K562 (cell line): ENCODE measurements at regions of chr13 and their contacts with region 1.

Region 1: GRCh38 chr13:107993239-107993872 is 222.0 kb downstream of the LIG4 start:
- DNase-seq: peak; percentile 18 to 27 (median 22)
- ATAC-seq: peak; percentile 72
- H3K4me3 ChIP-seq: no peak overlapping the region
- H3K27ac ChIP-seq: no peak overlapping the region
- H3K4me1 ChIP-seq: no peaks in the 10 kb centered on the region
- H3K27me3 ChIP-seq: no peaks in the 10 kb centered on the region
- CTCF ChIP-seq: no peak
- EP300 ChIP-seq: no peak
- POLR2A ChIP-seq: no peak
- RAD21 ChIP-seq: no peak

Region 2: DNA sequence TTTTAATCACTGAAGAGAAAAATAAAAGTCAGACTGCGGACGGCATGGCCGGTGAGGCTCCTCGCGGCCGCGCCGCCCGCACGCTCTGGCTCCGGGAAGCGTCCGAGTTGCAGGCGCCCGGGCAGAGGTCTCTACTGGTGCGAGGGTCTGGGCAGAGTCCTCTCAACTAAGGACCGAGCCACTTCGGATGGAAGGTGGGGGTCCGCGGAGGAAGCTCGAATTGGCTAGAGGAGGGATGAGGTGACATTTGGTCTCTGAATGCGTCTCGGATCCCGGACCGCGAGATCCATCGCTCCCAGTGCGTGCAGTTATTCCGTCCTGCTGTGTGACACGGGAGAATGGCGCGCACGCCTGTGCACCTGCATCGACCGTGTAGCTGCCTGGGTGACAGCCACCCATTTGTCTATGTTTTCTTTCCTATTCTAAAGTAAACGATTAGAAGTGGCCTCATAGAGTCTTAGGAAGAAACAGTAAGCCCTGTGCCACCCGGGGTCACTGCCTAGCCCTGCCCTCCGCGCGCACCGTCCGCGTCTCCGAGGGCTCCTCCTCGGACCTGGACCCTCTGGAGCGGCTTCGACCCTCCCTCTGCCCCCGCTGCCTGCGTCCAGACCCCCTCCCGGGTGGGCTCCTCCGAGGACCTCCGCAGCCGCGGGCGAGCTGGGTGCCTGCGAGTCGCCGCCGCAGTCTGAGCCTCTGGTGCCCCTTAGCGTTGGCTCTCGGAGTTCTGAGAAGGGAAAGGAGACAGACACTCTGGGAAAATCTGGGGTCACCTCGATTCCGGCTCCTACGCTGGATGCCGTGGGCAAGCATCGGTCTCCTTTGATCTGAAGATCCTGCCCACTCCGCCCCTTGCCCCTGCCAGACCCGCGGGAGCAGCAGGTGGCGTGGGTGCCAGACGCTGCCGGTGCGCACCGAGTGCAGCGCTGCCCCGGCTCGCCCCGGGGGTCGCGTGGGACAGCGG is 125.4 kb before region 1 on chr13:
- CTCF ChIA-PET with region 1: no interaction called
- POLR2A ChIA-PET with region 1: no interaction called
- in situ Hi-C with region 1: no loop called
- intact Hi-C with region 1: loop called (anchors 2 kb)
- DNase-seq: peak; percentile 73 to 85 (median 78)
- ATAC-seq: peak; percentile 75
- H3K4me3 ChIP-seq: peak overlapping the region; percentile 48
- H3K27ac ChIP-seq: no peak overlapping the region; the same call in 2 of the 3 replicates
- H3K4me1 ChIP-seq: peaks cover 22 to 31% of the 10 kb centered on the region in 2 experiments; a peak in 4 of 5 replicates
- H3K27me3 ChIP-seq: peaks cover 18 to 28% of the 10 kb centered on the region in 2 experiments
- CTCF ChIP-seq: no peak
- EP300 ChIP-seq: no peak
- POLR2A ChIP-seq: no peak
- RAD21 ChIP-seq: no peak

Region 3: DNA sequence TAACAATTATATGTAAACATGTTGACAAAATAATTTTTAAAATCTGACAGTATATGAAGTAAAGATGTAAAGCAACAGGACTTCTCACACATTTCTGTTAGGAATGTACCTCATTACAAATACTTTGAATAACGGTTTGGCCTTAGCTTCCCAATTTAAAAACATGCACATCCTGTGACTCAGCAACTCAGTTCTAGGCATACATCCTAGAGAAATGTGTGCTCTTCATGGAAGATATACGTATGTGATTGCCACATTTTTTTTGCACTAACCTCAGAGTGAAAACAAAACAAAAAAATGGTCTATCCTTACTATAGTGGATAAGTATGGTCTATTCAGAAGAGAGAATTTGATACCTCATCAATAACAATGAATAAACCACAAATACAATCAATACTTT is 92.6 kb before region 1 on chr13:
- CTCF ChIA-PET with region 1: no interaction called
- POLR2A ChIA-PET with region 1: no interaction called
- in situ Hi-C with region 1: no loop called
- intact Hi-C with region 1: loop called (anchors 5 kb)
- DNase-seq: peak in 3 of 4 experiments; percentile 53 to 73 (median 55)
- ATAC-seq: peak; percentile 49
- H3K4me3 ChIP-seq: no peak overlapping the region
- H3K27ac ChIP-seq: peak overlapping the region; percentile 19; the same call in 1 of the 3 replicates
- H3K4me1 ChIP-seq: peaks cover 0 to 26% of the 10 kb centered on the region in 2 experiments; a peak in 3 of 5 replicates
- H3K27me3 ChIP-seq: no peaks in the 10 kb centered on the region
- CTCF ChIP-seq: no peak
- EP300 ChIP-seq: no peak
- POLR2A ChIP-seq: no peak
- RAD21 ChIP-seq: no peak

Region 4: GRCh38 chr13:108056278-108056677 is 62.9 kb after region 1 on chr13:
- CTCF ChIA-PET with region 1: no interaction called
- POLR2A ChIA-PET with region 1: no interaction called
- in situ Hi-C with region 1: no loop called
- intact Hi-C with region 1: no loop called
- DNase-seq: no peak
- ATAC-seq: no peak
- H3K4me3 ChIP-seq: no peak overlapping the region
- H3K27ac ChIP-seq: no peak overlapping the region
- H3K4me1 ChIP-seq: no peaks in the 10 kb centered on the region
- H3K27me3 ChIP-seq: no peaks in the 10 kb centered on the region
- CTCF ChIP-seq: no peak
- EP300 ChIP-seq: no peak
- POLR2A ChIP-seq: no peak
- RAD21 ChIP-seq: no peak